ENCODE measurements at regions of chr22 and their contacts with region 1.

Region 1: DNA sequence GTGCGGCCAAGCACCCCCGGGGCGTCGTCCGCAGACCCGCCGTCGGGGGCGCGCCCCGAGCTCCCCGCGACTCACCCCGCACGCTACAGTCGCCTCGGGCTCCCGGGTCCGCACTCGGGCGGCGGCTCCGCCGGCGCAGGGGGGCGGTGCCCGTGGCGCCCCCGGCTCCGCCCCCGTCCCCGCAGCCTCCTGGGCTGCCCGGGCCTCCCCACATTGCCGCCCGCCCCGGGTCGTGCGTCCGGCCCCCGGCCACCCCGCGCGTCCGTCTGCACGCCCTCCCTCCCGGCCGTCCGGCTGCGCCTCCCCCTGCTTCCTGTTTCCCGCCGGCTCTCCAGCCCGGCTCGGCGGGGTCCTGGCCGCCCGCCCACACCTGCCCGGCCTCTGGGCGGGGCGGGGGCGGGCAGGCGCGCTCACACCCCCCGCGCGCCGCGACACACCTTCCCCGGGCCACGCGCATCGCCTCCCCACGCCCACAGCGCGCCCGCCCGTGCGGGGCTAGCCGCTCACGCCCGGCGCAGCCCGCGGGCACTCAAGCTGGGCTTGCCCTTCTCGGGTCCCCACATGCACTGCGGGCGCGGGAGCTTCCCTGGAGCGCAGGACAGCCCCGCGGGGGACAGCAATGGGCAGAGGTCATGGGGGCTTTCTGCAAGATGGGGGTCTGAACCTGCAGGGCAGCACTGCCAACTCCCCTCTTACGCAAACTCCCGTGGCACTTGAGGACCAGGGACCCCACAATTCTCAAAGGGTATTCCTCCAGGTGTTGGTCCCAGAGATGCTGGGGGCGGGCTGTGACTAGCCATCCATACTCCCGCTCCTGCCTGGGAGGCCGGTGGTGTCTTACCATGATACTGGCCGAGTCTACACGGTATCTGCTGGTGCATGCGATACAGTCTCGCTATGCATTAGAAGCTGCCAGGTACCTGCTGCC is at the start of gene CARD10:
- DNase-seq: no peak
- ATAC-seq: peak; percentile 37
- H3K4me3 ChIP-seq: peak within 1 kb of the TSS; percentile 76 to 89 (median 85)
- H3K27ac ChIP-seq: peak within 1 kb of the TSS; percentile 71
- H3K4me1 ChIP-seq: peaks cover 86% of the 10 kb centered on the region
- H3K27me3 ChIP-seq: no peaks in the 10 kb centered on the region; a peak in 1 of 5 replicates
- CTCF ChIP-seq: no peak
- EP300 ChIP-seq: no peak
- POLR2A ChIP-seq: no peak
- RAD21 ChIP-seq: no peak
- total RNA-seq, gene CARD10: 28.9 and 35.2 TPM in 2 replicates

Region 2: DNA sequence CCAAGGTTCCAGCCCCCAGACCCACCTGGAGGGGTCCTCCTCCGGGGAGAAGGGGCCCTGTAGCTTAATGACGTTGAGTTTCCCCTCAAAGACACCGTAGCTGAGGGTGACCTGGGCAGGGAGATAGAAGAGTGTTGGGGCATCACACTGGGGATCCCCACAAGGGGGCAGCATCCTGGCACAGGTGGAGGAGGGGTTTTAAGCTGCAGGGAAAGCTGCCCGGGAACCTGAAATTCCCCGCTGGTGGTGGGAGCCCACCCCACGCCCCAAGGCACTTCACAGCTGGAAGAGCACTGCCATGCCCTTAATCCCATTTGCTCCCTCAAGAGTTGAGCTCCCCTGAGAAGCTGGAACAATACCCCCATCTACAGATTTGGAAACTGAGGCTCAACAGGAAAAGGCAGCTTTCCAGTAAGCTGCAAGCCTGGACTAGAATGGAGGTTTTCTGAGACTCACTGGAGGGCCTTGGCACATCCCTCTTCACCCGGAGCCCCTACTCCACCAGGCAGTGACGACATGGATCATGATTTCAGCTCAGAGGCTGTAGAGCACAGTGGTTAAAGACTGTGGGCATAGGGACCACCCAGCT is 47.0 kb before region 1 on chr22:
- CTCF ChIA-PET with region 1: no interaction called
- POLR2A ChIA-PET with region 1: interaction called, 6 read pairs
- in situ Hi-C with region 1: no loop called
- intact Hi-C with region 1: loop called (anchors 10 kb)
- DNase-seq: peak; percentile 46
- ATAC-seq: peak; percentile 68
- H3K4me3 ChIP-seq: no peak overlapping the region
- H3K27ac ChIP-seq: no peak overlapping the region
- H3K4me1 ChIP-seq: peaks cover 19% of the 10 kb centered on the region
- H3K27me3 ChIP-seq: peaks cover 0 to 7% of the 10 kb centered on the region in 2 experiments; a peak in 2 of 5 replicates
- CTCF ChIP-seq: peak; percentile 88
- EP300 ChIP-seq: no peak
- POLR2A ChIP-seq: no peak
- RAD21 ChIP-seq: peak; percentile 76

Region 3: GRCh38 chr22:37492428-37493344 is 26.8 kb before region 1 on chr22:
- CTCF ChIA-PET with region 1: no interaction called
- POLR2A ChIA-PET with region 1: no interaction called
- in situ Hi-C with region 1: no loop called
- intact Hi-C with region 1: no loop called
- DNase-seq: no peak
- ATAC-seq: peak; percentile 12; the same call in 1 of the 3 replicates
- H3K4me3 ChIP-seq: no peak overlapping the region
- H3K27ac ChIP-seq: no peak overlapping the region
- H3K4me1 ChIP-seq: peaks cover 23% of the 10 kb centered on the region
- H3K27me3 ChIP-seq: no peaks in the 10 kb centered on the region
- CTCF ChIP-seq: peak; percentile 52
- EP300 ChIP-seq: no peak
- POLR2A ChIP-seq: no peak
- RAD21 ChIP-seq: no peak

Region 4: GRCh38 chr22:37623075-37624016 is 103.8 kb after region 1 on chr22:
- CTCF ChIA-PET with region 1: no interaction called
- POLR2A ChIA-PET with region 1: no interaction called
- in situ Hi-C with region 1: no loop called
- intact Hi-C with region 1: no loop called
- DNase-seq: peak; percentile 50
- ATAC-seq: peak; percentile 73
- H3K4me3 ChIP-seq: 0 out of 6 replicates have a peak overlapping the region, but pooled peaks of 1 of the 3 experiments have one; percentile 3
- H3K27ac ChIP-seq: no peak overlapping the region
- H3K4me1 ChIP-seq: peaks cover 10% of the 10 kb centered on the region
- H3K27me3 ChIP-seq: no peaks in the 10 kb centered on the region; a peak in 1 of 5 replicates
- CTCF ChIP-seq: peak; percentile 78
- EP300 ChIP-seq: no peak
- POLR2A ChIP-seq: no peak
- RAD21 ChIP-seq: peak; percentile 71

Region 5: DNA sequence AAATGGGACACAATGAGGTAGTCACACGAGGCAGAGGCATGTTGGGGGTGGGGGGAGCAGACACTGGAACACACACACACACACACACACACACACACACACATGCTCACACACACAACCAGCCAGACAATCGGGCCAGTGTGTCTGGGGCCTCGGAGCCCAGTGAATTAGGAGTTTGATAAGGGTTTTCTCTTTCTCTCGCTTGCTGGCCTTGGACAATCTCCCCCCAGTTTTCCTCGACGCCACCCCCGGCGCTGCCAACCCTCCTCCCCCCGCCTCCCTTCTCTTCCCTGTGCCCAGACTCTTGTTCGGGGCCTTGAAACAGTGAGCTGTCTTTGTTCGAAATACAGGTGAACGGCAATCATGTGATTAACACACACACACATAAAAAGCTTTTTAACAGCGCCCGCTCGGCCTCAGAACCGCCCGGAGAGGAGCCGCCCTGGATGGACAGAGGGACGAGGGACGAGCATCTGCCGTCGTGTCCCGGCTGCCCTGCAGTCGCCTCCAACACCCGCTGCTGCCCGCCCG is 466.3 kb after region 1 on chr22:
- CTCF ChIA-PET with region 1: no interaction called
- POLR2A ChIA-PET with region 1: no interaction called
- in situ Hi-C with region 1: no loop called
- intact Hi-C with region 1: no loop called
- DNase-seq: no peak
- ATAC-seq: no peak
- H3K4me3 ChIP-seq: no peak overlapping the region
- H3K27ac ChIP-seq: no peak overlapping the region
- H3K4me1 ChIP-seq: peaks cover 22% of the 10 kb centered on the region
- H3K27me3 ChIP-seq: no peaks in the 10 kb centered on the region
- CTCF ChIP-seq: no peak
- EP300 ChIP-seq: no peak
- POLR2A ChIP-seq: no peak
- RAD21 ChIP-seq: no peak

Measured in HepG2 (cell line).